Heart right ventricle (tissue), 16 donors: ENCODE measurements at regions of chr18 and their contacts with region 1.

Region 1: GRCh38 chr18:28459587-28459986 is 282.7 kb upstream of the CDH2 start:
- DNase-seq: no peak
- ATAC-seq: no peak
- H3K4me3 ChIP-seq: no peak overlapping the region
- H3K27ac ChIP-seq: no peak overlapping the region
- H3K4me1 ChIP-seq: no peaks in the 10 kb centered on the region
- H3K27me3 ChIP-seq: no peaks in the 10 kb centered on the region
- CTCF ChIP-seq: no peak

Region 2: GRCh38 chr18:28398471-28398870 is 61.1 kb before region 1 on chr18:
- intact Hi-C with region 1: loop called in 1 of 10 experiments (anchors 10 kb)
- DNase-seq: no peak
- ATAC-seq: no peak
- H3K4me3 ChIP-seq: no peak overlapping the region
- H3K27ac ChIP-seq: no peak overlapping the region
- H3K4me1 ChIP-seq: no peaks in the 10 kb centered on the region
- H3K27me3 ChIP-seq: no peaks in the 10 kb centered on the region
- CTCF ChIP-seq: no peak